ENCODE measurements at regions of chrX and their contacts with region 1.

Region 1: DNA sequence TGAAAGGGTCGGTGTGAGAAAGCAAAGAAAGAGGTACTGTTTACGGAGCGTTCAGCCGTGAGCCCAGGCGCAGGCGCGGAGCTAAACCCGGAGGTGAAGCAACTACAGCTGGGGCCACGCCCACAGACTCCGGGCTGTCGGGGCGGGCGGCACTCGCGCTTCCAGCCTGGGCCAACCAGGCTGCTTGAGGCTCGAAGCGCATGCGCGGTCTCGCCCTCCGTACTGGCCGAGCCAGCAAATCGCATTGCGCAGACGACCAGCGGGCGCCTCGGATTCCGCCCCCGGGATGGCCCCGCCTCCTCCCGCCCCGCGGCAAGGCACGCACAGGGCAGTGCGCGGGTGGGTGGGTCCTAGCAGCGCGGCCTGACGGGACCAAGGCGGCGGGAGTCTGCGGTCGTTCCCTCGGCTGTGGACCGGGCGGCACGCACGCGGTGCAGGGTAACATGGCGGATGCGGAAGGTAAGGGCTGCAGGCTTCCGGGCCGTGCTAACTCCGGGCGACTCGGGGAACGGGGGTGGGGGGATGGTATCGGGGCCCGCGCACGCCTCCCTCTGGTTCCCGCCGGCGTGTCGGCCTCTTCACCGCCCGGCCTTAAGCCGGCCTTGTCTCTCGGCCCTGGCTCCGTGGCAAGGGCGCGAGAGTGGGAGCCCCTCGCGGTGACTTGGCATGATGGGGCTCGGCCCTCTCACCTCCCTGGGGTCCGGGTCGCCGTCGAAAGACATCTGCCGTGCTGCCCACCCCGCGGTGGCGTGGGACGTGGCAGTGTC is at the start of gene DKC1:
- DNase-seq: peak; percentile 91 to 98 (median 94)
- ATAC-seq: peak; percentile 87
- H3K4me3 ChIP-seq: peak within 1 kb of the TSS; percentile 80
- H3K27ac ChIP-seq: peak within 1 kb of the TSS; percentile 95
- H3K4me1 ChIP-seq: peaks cover 10 to 55% of the 10 kb centered on the region in 2 experiments
- H3K27me3 ChIP-seq: no peaks in the 10 kb centered on the region
- CTCF ChIP-seq: no peak
- EP300 ChIP-seq: no peak
- POLR2A ChIP-seq: peak; percentile 91; the same call in 1 of the 2 replicates
- RAD21 ChIP-seq: no peak
- polyA plus RNA-seq, gene DKC1: 209 to 313 TPM

Region 2: GRCh38 chrX:154748712-154749343 is 13.9 kb before region 1 on chrX:
- CTCF ChIA-PET with region 1: no interaction called
- POLR2A ChIA-PET with region 1: interaction called, 13 read pairs
- in situ Hi-C with region 1: no loop called
- intact Hi-C with region 1: no loop called
- DNase-seq: peak; percentile 61 to 85 (median 68)
- ATAC-seq: peak; percentile 74
- H3K4me3 ChIP-seq: peak overlapping the region; percentile 69; the same call in 1 of the 2 replicates
- H3K27ac ChIP-seq: peak overlapping the region; percentile 34
- H3K4me1 ChIP-seq: peaks cover 20 to 29% of the 10 kb centered on the region in 2 experiments; a peak in 3 of 5 replicates
- H3K27me3 ChIP-seq: no peaks in the 10 kb centered on the region
- CTCF ChIP-seq: peak; percentile 68 to 84 (median 81)
- EP300 ChIP-seq: no peak
- POLR2A ChIP-seq: no peak
- RAD21 ChIP-seq: peak; percentile 77 to 87

Region 3: DNA sequence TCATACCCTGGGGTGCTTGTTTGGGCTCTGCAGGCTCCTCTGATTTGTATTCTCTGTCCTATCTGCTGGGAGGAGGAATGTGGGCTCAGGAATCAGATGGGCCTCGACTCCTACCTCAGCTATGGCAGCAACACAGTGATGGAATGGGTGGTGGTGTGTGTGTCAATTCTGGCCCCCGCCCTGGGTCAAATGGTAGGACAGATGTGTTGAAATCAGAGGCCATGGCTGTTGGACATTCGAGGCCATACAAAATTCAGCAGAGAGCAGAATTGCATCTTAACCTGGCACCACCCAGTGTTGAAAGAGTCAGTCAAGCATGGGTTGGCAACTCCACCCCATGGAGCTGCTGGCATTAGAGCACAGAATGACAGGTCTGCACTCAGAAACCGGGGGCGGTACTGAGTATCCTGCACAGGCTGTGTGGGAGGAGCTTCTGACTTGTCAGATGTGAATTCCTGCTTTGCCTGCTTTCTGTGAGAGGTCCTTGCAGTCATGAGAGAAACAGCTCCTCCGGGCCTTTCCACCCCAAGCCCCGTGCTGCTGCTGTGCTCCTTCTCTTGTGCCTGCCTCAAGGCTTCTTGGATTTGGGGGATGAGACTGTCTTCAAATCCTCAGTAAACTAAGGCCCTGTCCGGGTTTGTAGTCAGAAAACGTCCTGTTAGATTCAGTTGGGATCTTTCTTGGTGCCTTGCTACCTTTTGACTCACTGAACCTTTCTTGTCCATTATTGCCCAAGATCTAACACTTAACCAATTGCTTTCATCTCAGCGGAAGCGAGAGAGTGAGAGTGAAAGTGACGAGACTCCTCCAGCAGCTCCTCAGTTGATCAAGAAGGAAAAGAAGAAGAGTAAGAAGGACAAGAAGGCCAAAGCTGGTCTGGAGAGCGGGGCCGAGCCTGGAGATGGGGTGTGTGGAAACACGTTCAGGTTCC is 13.0 kb after region 1 on chrX:
- CTCF ChIA-PET with region 1: no interaction called
- POLR2A ChIA-PET with region 1: interaction called, 94 read pairs
- in situ Hi-C with region 1: no loop called
- intact Hi-C with region 1: no loop called
- DNase-seq: peak in 2 of 4 experiments; percentile 29 to 67
- ATAC-seq: peak; percentile 70
- H3K4me3 ChIP-seq: no peak overlapping the region
- H3K27ac ChIP-seq: 0 out of 3 replicates have a peak overlapping the region, but pooled peaks have one; percentile 48
- H3K4me1 ChIP-seq: peaks cover 0 to 12% of the 10 kb centered on the region in 2 experiments; a peak in 3 of 5 replicates
- H3K27me3 ChIP-seq: no peaks in the 10 kb centered on the region
- CTCF ChIP-seq: no peak
- EP300 ChIP-seq: no peak
- POLR2A ChIP-seq: peak; percentile 44
- RAD21 ChIP-seq: no peak

Region 4: DNA sequence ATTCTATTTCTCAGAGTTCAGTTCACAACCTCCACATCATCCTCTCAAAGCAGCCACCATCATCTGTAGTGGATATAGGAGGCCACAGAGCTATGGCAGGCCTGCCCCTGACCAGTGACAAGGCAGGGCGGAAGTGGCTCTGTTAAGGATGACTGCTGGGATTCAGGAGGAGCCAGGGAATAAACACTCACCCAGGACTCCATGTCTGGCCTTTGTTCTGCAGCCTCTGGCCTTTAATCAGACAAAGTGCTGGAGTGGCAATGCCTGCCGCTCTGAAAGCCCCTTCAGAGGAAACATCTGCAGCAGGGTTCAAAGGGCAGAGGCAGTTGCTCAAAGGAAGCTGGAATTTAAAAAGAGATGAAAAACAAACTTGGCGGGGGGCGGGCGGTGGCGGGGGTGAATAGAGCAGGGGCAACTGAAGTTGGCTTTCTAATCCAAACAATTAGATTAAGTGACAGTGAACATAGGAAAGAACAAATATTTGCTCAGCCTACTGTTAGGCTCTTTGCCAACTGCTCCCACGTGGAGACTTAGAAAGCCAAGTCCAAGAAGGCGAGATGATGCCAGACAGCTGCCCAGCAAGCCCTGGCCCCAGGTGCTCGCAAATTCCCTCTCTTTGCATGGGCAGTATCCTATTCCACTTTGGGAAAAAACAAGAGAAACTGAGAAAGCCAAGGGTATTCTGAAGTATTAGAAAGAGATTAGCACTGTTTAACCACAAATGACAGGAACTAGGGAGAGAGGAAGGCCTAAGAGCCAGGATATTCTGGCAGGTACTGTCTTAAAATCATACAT is 37.0 kb after region 1 on chrX:
- CTCF ChIA-PET with region 1: no interaction called
- POLR2A ChIA-PET with region 1: interaction called, 4 read pairs
- in situ Hi-C with region 1: no loop called
- intact Hi-C with region 1: loop called (anchors 1 kb)
- DNase-seq: peak in 1 of 4 experiments; percentile 32
- ATAC-seq: peak; percentile 32; the same call in 1 of the 3 replicates
- H3K4me3 ChIP-seq: peak overlapping the region; percentile 89
- H3K27ac ChIP-seq: peak overlapping the region; percentile 100
- H3K4me1 ChIP-seq: peaks cover 22 to 44% of the 10 kb centered on the region in 2 experiments
- H3K27me3 ChIP-seq: no peaks in the 10 kb centered on the region
- CTCF ChIP-seq: no peak
- EP300 ChIP-seq: no peak
- POLR2A ChIP-seq: peak; percentile 49
- RAD21 ChIP-seq: no peak

Region 5: DNA sequence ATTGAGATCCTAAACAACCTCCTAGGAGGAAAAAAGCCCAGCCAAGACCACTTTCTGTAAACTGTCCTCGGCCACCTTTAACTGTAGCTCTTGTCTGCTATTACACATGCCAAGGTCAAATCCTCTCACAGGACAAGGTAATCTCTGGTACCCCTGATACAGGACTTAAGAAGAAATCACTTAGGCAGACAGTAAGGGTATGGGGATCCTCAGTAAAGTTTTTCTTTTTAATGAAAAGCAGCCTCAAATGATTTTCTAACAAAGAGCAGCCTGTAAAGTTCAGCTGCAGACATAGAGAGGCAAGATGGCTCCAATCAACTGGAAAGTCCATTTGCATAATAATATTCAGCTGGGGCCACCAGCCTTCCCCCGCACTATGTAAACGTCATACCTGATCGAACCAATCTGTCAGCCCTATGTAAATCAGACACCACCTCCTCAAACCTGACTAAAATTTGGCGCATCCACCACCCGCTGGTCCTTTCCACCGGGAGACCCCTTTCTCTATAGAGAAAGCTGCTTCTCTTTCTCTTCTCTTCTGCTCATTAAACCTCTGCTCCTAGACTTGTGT is 57.1 kb after region 1 on chrX:
- CTCF ChIA-PET with region 1: no interaction called
- POLR2A ChIA-PET with region 1: interaction called, 3 read pairs
- in situ Hi-C with region 1: no loop called
- intact Hi-C with region 1: loop called (anchors 5 kb)
- DNase-seq: peak in 2 of 4 experiments; percentile 44 to 83
- ATAC-seq: peak; percentile 73
- H3K4me3 ChIP-seq: no peak overlapping the region; the same call in 1 of the 2 replicates
- H3K27ac ChIP-seq: peak overlapping the region; percentile 97
- H3K4me1 ChIP-seq: peaks cover 22 to 37% of the 10 kb centered on the region in 2 experiments; a peak in 4 of 5 replicates
- H3K27me3 ChIP-seq: no peaks in the 10 kb centered on the region
- CTCF ChIP-seq: no peak
- EP300 ChIP-seq: no peak
- POLR2A ChIP-seq: no peak
- RAD21 ChIP-seq: no peak

Region 6: DNA sequence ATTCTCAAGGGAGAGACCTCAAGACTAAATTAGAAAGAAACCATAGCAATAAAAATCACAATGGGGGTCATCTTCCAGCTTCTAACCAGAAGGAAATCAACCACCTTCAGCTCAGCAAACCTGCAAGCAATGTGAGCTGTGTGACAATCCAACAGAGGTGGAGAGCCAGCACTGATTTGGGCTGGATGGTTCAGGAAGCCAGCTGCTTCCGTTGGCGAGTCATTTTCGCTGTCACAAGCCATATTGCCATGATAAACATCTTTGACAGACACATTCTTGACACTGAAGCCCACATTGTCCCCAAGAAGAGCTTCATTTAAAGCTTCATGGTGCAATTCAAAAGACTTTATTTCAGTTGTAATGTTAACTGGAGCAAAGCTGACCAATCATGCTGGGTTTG is 146.1 kb after region 1 on chrX:
- CTCF ChIA-PET with region 1: no interaction called
- POLR2A ChIA-PET with region 1: no interaction called
- in situ Hi-C with region 1: no loop called
- intact Hi-C with region 1: no loop called
- DNase-seq: no peak
- ATAC-seq: no peak
- H3K4me3 ChIP-seq: no peak overlapping the region
- H3K27ac ChIP-seq: no peak overlapping the region
- H3K4me1 ChIP-seq: no peaks in the 10 kb centered on the region
- H3K27me3 ChIP-seq: no peaks in the 10 kb centered on the region
- CTCF ChIP-seq: no peak
- EP300 ChIP-seq: no peak
- POLR2A ChIP-seq: no peak
- RAD21 ChIP-seq: no peak

Region 7: GRCh38 chrX:155070975-155071693 is 308.4 kb after region 1 on chrX and contains the starts of genes BRCC3, CMC4 and MTCP1:
- CTCF ChIA-PET with region 1: no interaction called
- POLR2A ChIA-PET with region 1: no interaction called
- in situ Hi-C with region 1: no loop called
- intact Hi-C with region 1: loop called (anchors 5 kb)
- DNase-seq: peak; percentile 90 to 94 (median 92)
- ATAC-seq: peak; percentile 95
- H3K4me3 ChIP-seq: peak within 1 kb of the TSS; percentile 71
- H3K27ac ChIP-seq: peak within 1 kb of the TSS; percentile 80
- H3K4me1 ChIP-seq: peaks cover 4 to 11% of the 10 kb centered on the region in 2 experiments; a peak in 4 of 5 replicates
- H3K27me3 ChIP-seq: no peaks in the 10 kb centered on the region
- CTCF ChIP-seq: 0 out of 6 replicates have a peak, but pooled peaks of 1 of the 3 experiments have one; percentile 5
- EP300 ChIP-seq: no peak
- POLR2A ChIP-seq: peak; percentile 87
- RAD21 ChIP-seq: no peak
- polyA plus RNA-seq, gene BRCC3: 31.2 to 44.8 TPM
- polyA plus RNA-seq, gene CMC4: 3.5 to 6.3 TPM
- polyA plus RNA-seq, gene MTCP1: 12.7 to 20.9 TPM

Measured in K562 (cell line).